GM13976 (cell line): ENCODE measurements at regions of chr16 and their contacts with region 1.

Region 1: GRCh38 chr16:30429678-30430427 is at the start of gene DCTPP1:
- DNase-seq: peak; percentile 95
- CTCF ChIP-seq: peak; percentile 77

Region 2: DNA sequence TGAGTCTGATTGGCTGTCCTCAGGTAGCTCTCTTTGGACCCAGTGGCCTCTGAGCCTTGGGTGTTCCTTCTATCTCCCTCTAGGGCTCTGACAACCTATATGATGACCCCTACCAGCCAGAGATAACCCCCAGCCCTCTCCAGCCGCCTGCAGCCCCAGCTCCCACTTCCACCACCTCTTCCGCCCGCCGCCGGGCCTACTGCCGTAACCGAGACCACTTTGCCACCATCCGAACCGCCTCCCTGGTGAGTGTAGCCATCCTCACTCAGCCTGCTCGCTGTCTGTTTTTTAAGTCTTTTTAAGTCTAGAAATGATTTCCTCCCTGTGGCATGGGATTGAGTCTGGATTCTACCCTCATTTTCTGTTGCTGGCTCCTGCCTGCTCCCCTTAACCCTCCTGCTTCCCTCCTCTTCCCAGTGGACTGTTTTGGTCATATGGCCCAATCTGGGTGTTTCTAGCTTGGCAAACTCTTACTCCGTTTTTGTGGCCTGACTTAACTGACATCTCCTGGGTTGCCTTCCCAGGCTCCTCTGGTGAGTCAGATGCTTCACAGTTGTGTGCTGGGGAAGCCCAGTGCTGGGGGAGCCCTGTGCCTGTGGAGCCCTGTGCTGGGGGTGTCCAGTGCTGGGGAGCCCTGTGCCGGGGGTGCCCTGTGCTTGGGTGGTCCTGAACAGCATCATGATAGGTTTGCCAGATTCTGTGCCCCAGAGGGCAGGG is 446.3 kb before region 1 on chr16:
- in situ Hi-C with region 1: no loop called
- DNase-seq: no peak
- CTCF ChIP-seq: no peak

Region 3: DNA sequence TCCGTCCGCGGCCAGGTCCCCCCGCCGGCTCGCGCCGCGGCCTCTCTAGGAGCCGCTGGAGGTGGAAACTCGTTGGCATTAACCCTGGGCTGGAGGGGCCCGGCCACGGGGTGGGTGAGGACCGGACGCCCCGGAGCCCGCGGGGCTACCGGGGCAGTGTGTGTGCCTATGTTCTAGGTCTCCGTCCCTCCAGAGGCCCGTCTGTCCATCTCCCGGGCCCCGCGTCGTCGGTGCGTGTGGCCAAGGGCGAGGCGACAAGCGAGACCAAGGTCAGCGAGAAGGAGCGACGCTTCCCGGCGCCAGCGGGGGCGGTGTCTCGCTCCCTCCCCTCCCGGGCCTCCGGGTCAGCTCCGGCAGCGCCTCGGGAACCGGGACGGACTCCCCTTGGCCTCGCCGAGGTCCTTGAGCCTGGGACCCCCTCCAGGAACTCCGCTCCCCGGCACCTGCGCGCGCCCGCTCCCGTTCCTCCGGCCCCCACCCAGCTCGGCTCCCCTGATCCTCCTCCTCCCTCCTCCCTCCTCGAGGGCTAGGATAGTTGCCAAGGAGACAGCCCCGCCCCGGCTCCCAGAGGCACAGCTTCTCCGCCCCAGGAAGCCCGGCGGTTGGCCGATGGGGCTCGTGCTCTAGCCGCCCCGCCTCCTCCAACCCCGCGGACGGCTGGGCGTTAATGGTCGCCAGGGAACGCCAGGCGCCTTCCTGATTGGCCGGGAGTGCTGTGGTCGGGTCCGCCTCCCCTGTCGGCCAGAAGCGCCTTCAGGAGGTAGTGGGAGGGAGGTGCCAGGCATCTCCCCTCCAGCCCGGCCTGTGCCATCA is 97.2 kb after region 1 on chr16:
- in situ Hi-C with region 1: loop called (anchors 10 kb)
- DNase-seq: peak; percentile 97
- CTCF ChIP-seq: no peak

Region 4: DNA sequence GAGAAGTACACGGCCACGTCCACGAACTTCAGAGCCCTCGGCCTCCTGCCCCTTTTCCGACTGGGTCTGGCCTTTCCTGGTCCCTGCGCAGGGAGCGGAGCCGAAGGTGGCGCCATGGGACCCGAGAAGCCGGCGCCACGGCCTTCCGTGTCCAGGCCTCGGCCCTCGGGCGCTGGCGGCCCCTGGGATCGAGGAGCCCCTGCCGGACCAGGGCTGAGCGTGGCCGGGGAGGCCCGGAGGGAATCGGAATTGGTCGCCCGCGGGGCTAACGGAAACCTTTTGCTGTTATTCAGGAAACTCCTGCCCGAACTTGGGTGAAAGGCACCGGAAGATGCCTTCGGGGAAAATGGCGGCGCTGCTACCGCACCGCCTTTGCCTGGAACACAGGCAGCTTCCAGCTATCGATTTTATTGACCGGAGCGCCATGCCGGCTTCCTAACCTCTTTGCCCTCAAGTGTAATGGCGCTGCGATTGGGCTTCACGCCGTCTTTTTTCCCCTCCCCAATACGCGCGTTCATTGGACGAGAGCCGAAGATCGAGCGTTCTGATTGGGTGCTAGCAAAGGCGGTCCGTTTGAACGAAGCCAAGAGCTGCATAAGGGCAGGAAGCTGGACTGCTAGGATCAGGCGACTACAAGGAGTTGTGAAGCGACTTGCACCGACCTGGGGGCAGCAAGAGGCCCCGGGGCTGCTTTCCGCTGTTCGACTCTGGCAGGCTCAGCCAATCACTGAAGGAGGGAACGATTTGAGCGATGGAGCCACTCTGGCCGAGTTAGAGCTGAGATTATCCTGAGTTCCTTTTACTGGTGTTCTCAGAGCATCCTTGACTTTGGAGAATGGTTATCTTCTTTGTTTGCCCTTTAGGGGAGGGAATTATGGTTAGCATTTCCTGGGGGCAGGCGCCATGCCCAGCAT is 180.3 kb after region 1 on chr16 and contains the start of gene ZNF689:
- in situ Hi-C with region 1: loop called (anchors 25 kb)
- DNase-seq: peak; percentile 97
- CTCF ChIP-seq: no peak